ENCODE measurements at regions of chr10 and their contacts with region 1.

Region 1: DNA sequence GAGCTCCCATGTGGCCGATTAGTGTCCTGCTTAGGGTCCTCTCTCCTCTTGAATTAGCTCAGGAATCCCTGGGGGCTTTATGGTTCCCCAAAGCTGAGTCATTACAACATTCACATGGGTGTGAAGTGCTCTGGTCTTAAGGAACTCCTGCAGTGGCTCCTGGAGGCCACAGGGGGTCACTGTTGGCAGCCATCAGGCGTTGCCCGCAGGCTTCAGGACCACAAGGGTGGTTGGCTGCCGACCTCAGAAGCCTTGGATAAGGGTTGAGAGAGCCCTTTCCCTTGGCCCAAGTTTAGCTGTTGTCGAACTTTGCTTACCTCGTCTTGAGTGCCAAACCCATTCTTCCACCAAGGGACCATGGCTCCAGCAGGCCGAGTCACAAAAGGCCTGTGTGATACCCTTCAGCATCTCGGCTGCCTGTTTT is 61.7 kb downstream of the SH2D4B start:
- DNase-seq: peak; percentile 58
- H3K4me3 Mint-ChIP-seq: no peak overlapping the region
- H3K27ac Mint-ChIP-seq: no peak overlapping the region
- H3K4me1 Mint-ChIP-seq: no peaks in the 10 kb centered on the region
- H3K27me3 Mint-ChIP-seq: no peaks in the 10 kb centered on the region

Region 2: DNA sequence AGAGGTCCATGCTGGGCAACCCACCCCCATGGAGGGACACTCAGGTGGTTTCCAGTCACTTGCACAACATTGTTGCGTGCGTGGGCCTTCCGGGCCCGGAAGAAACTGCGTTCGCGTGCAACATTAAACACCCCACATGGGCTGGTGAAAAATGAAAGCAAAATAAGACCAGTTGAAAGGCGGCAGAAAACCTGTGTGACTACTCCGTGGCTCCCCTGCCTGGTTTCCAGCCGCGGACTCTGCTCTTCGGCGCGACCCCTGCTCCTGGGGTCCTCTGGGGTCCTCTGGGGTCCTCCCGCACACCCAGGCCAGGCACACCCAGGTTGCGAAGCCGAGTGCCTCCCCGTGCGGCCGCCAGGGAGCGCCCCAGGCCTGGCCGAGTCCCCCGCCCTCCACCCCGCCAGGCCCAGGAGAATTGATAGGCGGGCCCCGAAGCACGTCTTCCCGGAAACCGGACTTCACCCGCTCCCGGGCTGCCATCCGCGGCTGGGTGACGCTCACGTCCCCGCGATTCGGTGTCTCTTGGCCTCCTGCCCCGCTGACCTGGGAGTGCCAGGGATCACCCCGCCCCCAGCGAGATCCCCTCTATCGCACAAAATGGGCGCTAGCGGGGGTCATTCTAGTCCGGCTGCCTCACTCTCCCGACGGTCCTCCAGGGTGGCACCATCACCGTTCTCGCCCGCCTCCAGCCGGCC is 63.6 kb before region 1 on chr10:
- CTCF ChIA-PET with region 1: interaction called, 6 read pairs
- intact Hi-C with region 1: loop called (anchors 2 kb)
- DNase-seq: peak; percentile 83
- H3K4me3 Mint-ChIP-seq: peak overlapping the region; percentile 89
- H3K27ac Mint-ChIP-seq: peak overlapping the region; percentile 98
- H3K4me1 Mint-ChIP-seq: peaks cover 28% of the 10 kb centered on the region
- H3K27me3 Mint-ChIP-seq: no peaks in the 10 kb centered on the region

Region 3: GRCh38 chr10:80619036-80619435 is 19.6 kb after region 1 on chr10:
- CTCF ChIA-PET with region 1: interaction called, 11 read pairs
- intact Hi-C with region 1: no loop called
- DNase-seq: no peak
- H3K4me3 Mint-ChIP-seq: no peak overlapping the region
- H3K27ac Mint-ChIP-seq: no peak overlapping the region
- H3K4me1 Mint-ChIP-seq: no peaks in the 10 kb centered on the region
- H3K27me3 Mint-ChIP-seq: no peaks in the 10 kb centered on the region